ENCODE measurements at regions of chr13 and their contacts with region 1.

Region 1: GRCh38 chr13:110615322-110616102 is at the start of gene NAXD:
- DNase-seq: peak; percentile 94
- H3K4me3 ChIP-seq: peak within 1 kb of the TSS; percentile 79 to 96 (median 87)
- H3K27ac ChIP-seq: peak within 1 kb of the TSS; percentile 86 to 97 (median 94)
- H3K4me1 ChIP-seq: peaks cover 18 to 39% (median 26%) of the 10 kb centered on the region in 4 donors
- H3K27me3 ChIP-seq: no peaks in the 10 kb centered on the region
- CTCF ChIP-seq: no peak
- EP300 ChIP-seq: no peak
- POLR2A ChIP-seq: peak; percentile 72
- total RNA-seq, gene NAXD: 12.9 to 37.8 (median 33.3) TPM

Region 2: DNA sequence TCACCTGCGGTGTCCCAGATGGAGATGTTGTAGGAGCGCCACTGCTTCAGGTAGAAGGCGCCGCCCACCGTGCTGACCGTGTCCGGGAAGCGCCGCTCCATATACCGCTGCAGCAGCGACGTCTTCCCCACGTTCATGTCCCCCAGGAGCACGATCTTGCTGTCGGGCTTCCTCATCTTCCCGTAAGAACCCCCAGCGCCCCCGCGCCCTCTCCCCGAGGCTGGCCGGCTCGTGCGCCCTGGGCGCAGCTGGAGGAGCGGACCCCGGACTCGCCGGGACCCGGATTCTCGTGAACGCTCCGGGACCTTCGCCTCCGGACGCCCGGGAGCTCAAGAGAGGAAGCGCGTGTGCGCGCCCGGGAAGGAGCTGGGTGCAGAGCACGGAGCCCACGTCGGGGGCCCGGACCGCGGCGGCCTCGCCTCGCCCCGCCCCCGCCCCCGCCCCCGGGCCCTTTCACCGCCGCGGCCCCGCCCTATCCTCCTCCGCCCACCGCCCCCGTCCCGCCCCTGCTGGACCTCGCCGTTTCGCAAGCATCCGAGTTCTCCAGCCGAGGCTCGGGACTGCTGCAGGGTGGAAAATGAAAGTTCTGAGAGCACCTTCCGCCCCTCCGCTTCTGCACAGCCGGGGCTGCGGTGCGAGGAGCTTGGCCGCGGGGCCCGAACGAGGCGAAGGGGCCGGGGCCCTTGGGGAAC is 54.0 kb before region 1 on chr13 and contains the start of gene RAB20:
- in situ Hi-C with region 1: no loop called
- intact Hi-C with region 1: loop called (anchors 5 kb)
- DNase-seq: peak; percentile 92
- H3K4me3 ChIP-seq: peak within 1 kb of the TSS; percentile 72 to 93 (median 74)
- H3K27ac ChIP-seq: peak within 1 kb of the TSS; percentile 93 to 98 (median 96)
- H3K4me1 ChIP-seq: peaks cover 0 to 36% (median 27%) of the 10 kb centered on the region in 4 donors
- H3K27me3 ChIP-seq: no peaks in the 10 kb centered on the region
- CTCF ChIP-seq: no peak
- EP300 ChIP-seq: no peak
- POLR2A ChIP-seq: peak; percentile 87
- total RNA-seq, gene RAB20: 12.5 to 66.2 (median 54.1) TPM

Region 3: GRCh38 chr13:110705826-110706569 is 90.5 kb after region 1 on chr13 and contains the start of gene CARS2:
- in situ Hi-C with region 1: loop called in 2 of 4 experiments (anchors 10 to 25 kb)
- intact Hi-C with region 1: no loop called
- DNase-seq: peak; percentile 98
- H3K4me3 ChIP-seq: peak within 1 kb of the TSS; percentile 57 to 91 (median 73)
- H3K27ac ChIP-seq: peak within 1 kb of the TSS; percentile 78 to 93 (median 90)
- H3K4me1 ChIP-seq: peaks cover 0 to 24% (median 14%) of the 10 kb centered on the region in 4 donors
- H3K27me3 ChIP-seq: no peaks in the 10 kb centered on the region
- CTCF ChIP-seq: peak in 2 of 5 experiments; percentile 1 to 13
- EP300 ChIP-seq: peak; percentile 70
- POLR2A ChIP-seq: peak; percentile 63
- total RNA-seq, gene CARS2: 35.2 to 152 (median 56.2) TPM

Region 4: DNA sequence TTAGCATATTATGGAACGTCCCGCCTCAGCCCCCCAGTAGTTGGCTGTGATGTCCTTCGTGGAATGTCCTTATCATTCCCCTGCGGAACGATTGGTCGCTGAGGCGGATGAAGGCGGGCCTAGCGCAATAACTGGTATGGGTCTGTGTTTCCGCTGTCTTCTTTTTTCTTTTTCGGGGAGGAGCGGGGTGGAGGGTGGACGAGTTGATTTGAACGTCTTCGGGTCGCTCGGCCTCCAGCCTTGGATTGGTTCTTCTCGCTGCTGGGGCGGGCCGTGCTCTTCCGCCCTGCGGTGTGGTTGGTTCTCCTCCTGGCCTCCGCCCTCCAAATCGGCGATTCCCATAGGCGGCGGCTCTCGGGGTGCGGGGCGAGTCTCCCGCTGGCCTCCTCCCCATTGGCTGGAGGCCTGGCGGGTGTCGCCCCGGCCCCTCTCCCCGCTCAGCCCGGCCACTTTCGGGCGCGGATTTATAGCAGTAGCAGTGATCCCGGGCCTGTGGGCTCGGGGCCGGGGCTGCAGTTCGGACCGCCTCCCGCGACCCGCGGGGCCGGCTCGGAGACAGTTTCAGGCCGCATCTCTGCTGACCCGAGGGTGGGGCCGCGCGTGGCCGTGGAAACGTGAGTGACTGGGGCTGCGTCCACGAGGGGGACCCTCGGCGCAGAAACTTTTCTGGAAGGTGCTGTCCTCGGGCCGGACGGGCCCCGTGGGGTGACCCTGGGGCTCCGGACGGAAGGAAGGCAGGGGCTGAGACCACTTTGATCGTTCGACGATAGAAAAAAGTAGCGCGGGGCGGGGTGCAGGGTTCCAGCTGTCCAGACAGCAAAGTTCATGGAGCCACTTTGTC is 100.1 kb after region 1 on chr13:
- in situ Hi-C with region 1: loop called in 1 of 4 experiments (anchors 25 kb)
- intact Hi-C with region 1: no loop called
- DNase-seq: peak; percentile 98
- H3K4me3 ChIP-seq: peak overlapping the region; percentile 47 to 92 (median 85)
- H3K27ac ChIP-seq: peak overlapping the region; percentile 99 to 100 (median 100)
- H3K4me1 ChIP-seq: peaks cover 11 to 34% (median 30%) of the 10 kb centered on the region in 4 donors
- H3K27me3 ChIP-seq: no peaks in the 10 kb centered on the region
- CTCF ChIP-seq: peak in 2 of 5 experiments; percentile 20 to 46
- EP300 ChIP-seq: no peak
- POLR2A ChIP-seq: no peak

Measured in transverse colon (tissue), 4 donors.